OCI-LY7 (cell line): ENCODE measurements at regions of chr12 and their contacts with region 1.

Region 1: GRCh38 chr12:107131832-107132616 is 38.7 kb upstream of the CRY1 start:
- DNase-seq: peak; percentile 46
- H3K4me3 ChIP-seq: no peak overlapping the region
- H3K27ac ChIP-seq: no peak overlapping the region
- H3K4me1 ChIP-seq: no peaks in the 10 kb centered on the region
- CTCF ChIP-seq: peak; percentile 94

Region 2: DNA sequence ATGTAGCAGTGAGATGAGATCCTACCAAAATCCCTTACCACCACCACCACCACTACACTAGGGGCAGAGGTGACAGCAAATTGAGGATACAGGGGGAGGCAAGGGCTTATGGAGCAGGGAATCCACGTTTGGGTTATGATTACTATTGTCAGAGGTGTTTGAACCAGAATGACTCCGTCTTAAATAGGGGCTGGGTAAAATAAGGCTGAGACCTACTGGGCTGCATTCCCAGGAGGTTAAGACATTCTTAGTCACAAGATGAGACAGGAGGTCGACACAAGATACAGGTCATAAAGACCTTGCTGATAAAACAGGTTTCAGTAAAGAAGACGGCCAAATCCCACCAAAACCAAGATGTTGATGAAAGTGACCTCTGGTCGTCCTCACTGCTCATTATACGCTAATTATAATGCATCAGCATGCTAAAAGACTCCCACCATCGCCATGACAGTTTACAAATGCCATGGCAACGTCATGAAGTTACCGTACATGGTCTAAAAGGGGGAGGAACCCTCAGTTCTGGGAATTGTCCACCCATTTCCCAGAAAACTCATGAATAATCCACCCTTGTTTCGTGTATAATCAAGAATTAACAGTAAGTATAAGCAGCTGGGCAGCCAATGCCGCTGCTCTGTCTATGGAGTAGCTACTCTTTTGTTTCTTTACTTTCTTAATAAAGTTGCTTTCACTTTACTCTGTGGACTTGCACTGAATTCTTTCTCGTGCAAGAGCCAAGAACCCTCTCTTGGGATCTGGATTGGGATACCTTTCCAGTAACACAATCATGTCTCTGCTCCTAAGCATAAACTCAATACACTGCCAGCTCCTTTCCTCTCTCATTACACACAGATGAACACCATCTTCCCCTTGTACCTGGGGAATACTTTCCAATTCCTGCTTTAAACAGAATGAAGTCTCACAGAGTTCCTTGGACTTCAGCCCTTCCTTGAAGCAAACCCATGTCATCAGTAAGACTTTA is 22.0 kb before region 1 on chr12:
- CTCF ChIA-PET with region 1: no interaction called
- POLR2A ChIA-PET with region 1: no interaction called
- intact Hi-C with region 1: no loop called
- DNase-seq: no peak
- H3K4me3 ChIP-seq: no peak overlapping the region
- H3K27ac ChIP-seq: no peak overlapping the region
- H3K4me1 ChIP-seq: no peaks in the 10 kb centered on the region
- CTCF ChIP-seq: no peak

Region 3: GRCh38 chr12:107402041-107403022 is 270.3 kb after region 1 on chr12:
- CTCF ChIA-PET with region 1: no interaction called
- POLR2A ChIA-PET with region 1: no interaction called
- intact Hi-C with region 1: loop called (anchors 1 kb)
- DNase-seq: peak; percentile 43
- H3K4me3 ChIP-seq: no peak overlapping the region
- H3K27ac ChIP-seq: no peak overlapping the region
- H3K4me1 ChIP-seq: no peaks in the 10 kb centered on the region
- CTCF ChIP-seq: peak; percentile 76

Region 4: GRCh38 chr12:107607464-107608392 is 475.7 kb after region 1 on chr12:
- CTCF ChIA-PET with region 1: no interaction called
- POLR2A ChIA-PET with region 1: interaction called, 3 read pairs
- intact Hi-C with region 1: loop called (anchors 1 kb)
- DNase-seq: peak; percentile 80
- H3K4me3 ChIP-seq: no peak overlapping the region
- H3K27ac ChIP-seq: no peak overlapping the region
- H3K4me1 ChIP-seq: no peaks in the 10 kb centered on the region
- CTCF ChIP-seq: peak; percentile 90